GM10248 (cell line): ENCODE measurements at regions of chr3 and their contacts with region 1.

Region 1: DNA sequence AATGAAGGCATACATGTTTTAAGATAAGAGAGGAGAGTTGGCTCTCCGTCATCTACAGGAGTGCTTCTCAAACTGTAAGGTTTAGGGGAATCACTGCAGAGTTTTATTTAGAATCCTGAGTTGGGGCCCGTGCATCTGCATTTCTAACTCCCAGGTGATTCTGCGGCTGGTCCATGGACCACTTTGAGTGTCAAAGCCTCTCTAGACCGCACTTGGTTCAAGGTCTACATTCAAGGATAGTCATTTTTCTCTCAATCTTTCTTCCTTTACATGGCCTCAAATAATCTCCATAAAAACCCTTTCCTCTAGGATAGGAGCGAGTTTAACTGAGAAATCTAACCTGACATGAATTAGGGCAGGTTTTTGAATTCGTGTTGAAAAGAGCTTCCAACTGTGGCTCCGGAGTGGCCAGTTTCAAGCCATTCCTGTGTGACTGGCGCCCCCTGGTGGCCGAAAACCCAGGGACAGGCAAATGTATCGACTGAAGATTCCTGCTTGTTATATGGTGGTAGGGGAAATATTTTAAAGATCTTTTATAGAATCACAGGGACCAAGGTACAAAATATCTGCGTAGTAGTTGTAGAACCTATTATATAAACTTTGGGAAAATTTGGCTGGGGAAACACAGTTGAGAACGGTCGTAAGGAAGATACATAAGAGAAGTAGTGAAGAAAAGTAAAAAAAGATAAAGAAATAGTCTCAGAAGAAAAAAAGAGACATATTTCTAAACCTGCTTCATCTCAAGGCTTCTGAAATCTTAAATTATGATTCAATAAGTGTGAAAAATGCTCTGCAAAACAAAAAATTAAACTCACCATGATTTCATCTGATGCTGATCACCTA is 11.9 kb downstream of the GABRR3 start:
- DNase-seq: peak; percentile 56
- CTCF ChIP-seq: peak; percentile 91

Region 2: DNA sequence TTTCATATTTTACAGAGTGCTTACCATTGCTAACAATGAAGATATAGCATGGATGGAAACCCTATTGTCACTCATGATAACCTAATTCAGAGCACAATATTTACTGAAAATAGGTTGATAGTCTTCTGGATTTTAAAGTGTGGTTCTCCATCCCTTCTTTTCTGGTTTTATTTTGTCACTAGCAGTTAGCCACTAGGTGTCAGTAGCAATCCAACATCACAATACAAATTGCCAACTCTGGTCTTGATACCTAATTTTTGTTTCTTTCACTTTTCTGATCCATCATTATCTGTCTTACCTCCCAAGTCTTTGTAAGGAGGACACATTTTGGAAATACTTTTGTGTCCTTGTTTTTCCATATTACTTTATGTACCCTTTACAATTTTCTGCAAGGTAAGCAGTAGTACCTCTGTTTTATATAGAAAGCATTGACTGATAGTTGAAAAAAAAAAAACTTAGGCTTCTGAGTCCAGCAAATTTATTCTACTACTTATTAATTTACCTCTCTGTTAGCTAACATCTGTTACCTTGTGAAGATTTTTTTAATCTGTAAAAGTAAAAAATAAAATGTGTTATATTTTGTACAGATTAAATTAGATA is 229.7 kb before region 1 on chr3:
- CTCF ChIA-PET with region 1: interaction called, 102 read pairs
- POLR2A ChIA-PET with region 1: no interaction called
- DNase-seq: peak; percentile 18
- CTCF ChIP-seq: peak; percentile 76

Region 3: DNA sequence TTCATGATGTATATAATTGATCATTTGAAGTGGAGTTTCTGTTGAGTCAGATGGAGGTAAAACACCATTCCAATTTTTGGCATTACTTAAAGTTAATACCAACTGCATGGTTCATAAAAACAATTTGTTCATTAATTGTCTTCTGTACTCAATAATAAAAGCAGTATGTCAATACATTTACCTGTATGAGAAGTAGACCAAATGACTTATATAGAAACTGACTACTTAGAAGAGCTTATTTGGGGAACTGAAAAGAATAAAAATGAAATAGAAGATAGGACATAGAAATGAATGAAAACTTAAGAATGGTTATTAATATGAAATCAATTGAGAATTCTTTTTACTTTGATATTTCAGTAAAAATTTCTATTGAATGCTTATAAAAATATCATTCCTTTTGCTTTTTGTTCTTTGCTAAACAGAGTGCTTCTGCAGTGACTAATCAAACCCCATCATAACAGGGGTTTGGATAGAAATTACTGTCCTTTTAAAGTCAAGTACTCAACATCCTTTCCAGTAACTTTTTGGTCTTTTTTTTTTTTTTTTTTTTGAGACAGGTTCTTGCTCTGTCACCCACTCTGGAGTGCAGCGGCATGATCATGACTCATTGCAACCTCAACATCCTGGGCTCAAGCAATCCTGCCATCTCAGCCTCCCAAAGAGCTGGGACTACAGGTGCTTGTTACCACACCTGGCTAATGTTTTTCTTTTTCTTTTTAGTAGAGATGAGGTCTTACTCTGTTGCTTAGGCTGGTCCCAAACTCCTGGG is 207.9 kb before region 1 on chr3:
- CTCF ChIA-PET with region 1: interaction called, 13 read pairs
- POLR2A ChIA-PET with region 1: no interaction called
- DNase-seq: no peak
- CTCF ChIP-seq: no peak

Region 4: DNA sequence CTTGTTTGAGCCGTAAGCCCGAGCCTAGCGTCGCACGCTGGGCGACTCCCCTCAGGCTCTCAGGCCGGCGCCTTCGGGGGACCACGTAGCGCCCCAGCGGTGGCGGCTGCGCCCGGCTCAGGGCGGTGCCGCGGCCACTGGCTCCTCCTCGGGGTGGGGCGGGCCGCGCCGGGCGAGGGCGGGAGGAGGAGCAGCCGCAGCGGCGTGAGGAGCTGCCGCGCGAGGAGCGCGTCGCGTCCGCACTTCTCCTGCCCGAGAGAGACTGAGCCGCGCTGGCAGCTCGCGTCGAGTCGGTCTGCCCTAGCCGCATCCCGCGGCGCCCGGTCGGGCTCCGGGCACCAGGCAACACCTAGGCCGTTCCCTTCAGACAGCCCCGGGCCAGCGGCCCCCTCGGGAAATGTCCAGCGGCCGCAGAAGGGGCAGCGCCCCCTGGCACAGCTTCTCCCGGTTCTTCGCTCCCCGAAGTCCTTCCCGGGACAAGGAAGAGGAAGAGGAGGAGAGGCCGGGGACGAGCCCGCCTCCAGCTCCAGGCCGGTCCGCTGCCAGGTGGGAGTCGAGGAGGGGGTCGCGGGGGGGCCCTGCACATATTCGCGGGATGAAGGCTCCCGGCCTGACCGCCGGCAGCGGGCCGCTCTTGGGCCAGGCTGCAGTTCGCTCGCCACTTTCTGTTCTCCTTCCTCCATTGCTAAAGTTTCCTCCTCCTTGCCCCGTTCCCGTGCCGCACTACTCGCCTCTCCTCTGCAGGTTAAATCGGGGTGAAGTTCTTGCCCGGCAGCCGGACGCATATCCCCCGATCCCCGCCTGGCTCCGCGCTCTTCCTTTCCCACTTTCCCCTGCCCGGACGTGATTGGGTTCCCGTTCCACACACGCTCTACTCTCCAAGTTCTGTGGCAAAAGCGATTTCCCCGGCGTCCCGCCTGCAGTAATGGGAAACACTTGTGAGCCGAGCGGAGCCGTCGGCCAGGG is 201.1 kb before region 1 on chr3 and contains the start of gene CRYBG3:
- CTCF ChIA-PET with region 1: interaction called, 13 read pairs
- POLR2A ChIA-PET with region 1: no interaction called
- DNase-seq: peak; percentile 94
- CTCF ChIP-seq: peak; percentile 11

Region 5: DNA sequence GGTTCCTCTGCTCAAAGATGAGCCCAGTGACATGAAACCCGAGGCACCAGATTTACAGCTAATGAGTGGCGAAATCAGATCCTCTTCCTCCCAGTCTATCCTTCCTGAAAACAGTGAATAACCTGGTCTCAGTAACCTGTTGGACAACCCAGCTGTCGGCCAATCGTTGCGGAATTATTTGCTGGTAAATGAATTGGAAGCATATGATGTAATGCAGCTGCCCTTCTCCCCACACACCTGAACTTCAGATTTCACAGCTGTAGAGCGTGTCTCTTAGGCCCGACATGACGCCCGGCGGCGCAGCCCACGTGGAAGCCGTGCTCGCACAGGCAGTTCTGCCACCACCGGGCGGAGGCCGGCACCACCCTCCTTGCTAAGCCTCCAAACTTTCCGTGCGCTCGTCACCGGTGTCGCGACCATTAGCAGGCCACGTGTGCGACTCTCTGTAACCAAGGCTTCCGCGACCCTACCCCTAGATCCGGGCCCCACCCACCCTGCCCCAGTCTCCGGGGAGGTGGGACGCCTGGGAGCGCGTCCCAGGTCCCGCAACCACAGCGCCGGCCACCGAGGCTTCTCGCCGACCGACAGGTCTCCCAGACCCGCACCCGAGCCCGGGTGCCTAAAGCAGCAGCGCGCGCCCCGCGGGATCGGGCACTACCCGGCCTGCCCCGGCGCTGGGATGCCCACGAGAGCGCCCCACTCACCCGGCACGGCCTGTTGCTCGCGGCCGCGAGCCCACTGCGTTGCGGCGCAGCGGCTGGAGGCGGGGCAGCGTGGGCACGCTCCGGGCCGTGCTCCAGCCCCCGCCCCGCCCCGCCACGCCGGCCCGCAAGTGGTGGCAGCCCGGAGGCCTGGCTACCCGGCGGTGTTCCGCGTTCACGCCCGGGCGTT is 51.3 kb before region 1 on chr3 and contains the start of gene RIOX2:
- CTCF ChIA-PET with region 1: interaction called, 13 read pairs
- POLR2A ChIA-PET with region 1: no interaction called
- DNase-seq: peak; percentile 86
- CTCF ChIP-seq: no peak

Region 6: DNA sequence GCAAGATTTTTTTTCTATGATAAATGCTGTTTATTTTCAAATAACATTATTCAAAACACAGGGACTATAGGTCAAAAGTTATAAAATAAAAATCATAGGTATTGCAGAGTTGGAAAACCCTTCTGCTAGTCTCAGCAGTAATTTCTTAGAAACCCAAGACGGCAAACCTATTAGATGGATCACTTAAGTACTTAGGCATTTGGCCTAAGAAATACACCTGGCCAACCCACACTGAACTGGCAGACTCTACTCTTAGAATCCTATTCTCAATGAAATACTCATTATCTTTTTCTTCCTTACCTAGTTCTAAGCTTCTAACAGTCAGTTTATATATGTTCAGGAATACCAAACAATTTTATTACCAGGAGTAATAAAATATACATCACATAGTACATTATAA is 20.5 kb before region 1 on chr3:
- CTCF ChIA-PET with region 1: interaction called, 165 read pairs
- POLR2A ChIA-PET with region 1: no interaction called
- DNase-seq: no peak
- CTCF ChIP-seq: no peak

Region 7: DNA sequence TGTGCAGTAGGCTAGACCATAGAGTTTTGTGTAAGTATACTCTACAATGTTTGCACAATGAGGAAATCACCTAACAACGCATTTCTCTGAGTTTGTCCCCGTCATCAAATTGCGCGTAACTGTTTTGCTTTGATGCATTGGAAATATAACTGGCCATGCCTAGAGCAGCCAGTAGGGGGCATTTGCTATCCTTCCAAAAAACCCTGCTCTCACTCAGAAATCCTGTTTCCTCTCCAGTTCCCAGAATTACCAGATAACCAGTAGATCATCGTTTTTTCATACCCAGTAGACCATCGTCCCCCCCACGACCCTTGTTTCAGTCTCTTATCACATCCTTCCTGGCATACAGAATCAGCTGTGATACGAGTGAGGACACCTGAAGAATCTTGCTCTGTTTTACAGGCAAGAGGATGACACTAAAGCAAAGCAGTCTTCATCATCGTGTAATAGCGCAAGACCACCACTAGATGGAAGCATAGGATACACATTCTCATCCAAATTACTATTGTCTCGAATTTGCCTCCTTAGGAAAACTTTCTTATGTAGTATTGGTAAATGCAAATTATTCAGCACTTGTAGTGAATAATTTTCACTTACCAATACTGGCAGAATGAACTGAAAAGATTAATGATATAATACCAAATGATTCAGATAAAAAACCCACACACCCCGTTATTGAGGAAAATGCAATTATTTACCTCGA is 16.3 kb after region 1 on chr3:
- CTCF ChIA-PET with region 1: interaction called, 30 read pairs
- POLR2A ChIA-PET with region 1: no interaction called
- DNase-seq: peak; percentile 40
- CTCF ChIP-seq: peak; percentile 84